Activated CD8-positive, alpha-beta T cell treated with anti-CD3 and anti-CD28 coated beads, Interleukin-2, amount 10 ng/mL, durations not matched to agents 7 days and 5 days (primary cell): ENCODE measurements at regions of chr6 and their contacts with region 1.

Region 1: GRCh38 chr6:10521104-10521808 is at the start of gene GCNT2:
- DNase-seq: no peak
- ATAC-seq: no peak
- H3K4me3 Mint-ChIP-seq: no peak within 1 kb of the TSS
- H3K27ac Mint-ChIP-seq: no peak within 1 kb of the TSS
- H3K4me1 Mint-ChIP-seq: peaks cover 2% of the 10 kb centered on the region
- H3K27me3 Mint-ChIP-seq: peaks cover 2% of the 10 kb centered on the region
- total RNA-seq, gene GCNT2: 4.8 to 6.9 TPM

Region 2: GRCh38 chr6:10510592-10511367 is 10.5 kb before region 1 on chr6:
- CTCF ChIA-PET with region 1: interaction called, 10 read pairs
- POLR2A ChIA-PET with region 1: no interaction called
- DNase-seq: peak; percentile 70
- ATAC-seq: peak; percentile 99
- H3K4me3 Mint-ChIP-seq: no peak overlapping the region
- H3K27ac Mint-ChIP-seq: no peak overlapping the region
- H3K4me1 Mint-ChIP-seq: peaks cover 7% of the 10 kb centered on the region
- H3K27me3 Mint-ChIP-seq: peaks cover 18% of the 10 kb centered on the region